Heart left ventricle (tissue), 16 donors: ENCODE measurements at regions of chr11 and their contacts with region 1.

Region 1: DNA sequence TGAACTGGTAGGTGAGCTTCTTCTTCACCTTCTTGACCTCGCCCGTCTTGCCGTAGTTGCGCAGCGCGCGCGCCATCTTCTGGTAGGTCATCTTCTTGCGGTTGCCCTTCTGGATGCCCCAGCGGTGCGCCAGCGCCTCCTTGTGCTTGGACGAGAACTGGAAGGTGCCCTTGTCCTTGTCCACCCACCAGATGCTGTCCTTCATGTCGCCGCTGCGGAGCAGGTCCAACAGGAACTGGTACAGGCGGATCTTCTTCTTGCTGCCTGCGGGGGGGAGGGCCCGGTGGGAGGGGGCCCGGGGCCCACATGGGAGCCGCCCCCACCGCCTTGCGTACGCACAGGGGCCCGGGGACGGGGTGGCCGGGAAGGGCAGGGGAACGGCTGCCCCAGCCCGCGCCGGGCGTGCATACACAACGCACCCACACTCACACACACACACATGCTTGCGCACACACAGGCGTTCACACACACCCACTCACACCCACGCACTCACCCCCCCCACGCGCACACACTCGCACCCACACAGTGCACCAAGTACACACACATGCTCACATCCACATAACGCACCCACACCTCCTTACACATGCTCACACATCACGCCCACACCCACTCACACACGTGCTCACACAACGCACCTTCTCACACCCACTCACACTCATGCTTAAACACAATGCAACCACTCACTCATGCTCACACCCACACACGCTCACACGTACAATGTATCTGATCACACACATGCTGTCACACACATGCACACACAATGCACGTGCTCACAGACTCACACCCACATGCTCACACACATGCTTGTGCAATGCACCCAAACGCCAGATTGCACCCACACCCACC is 3.0 kb upstream of the MYBPC3 start:
- DNase-seq: peak; percentile 93 to 97 (median 96)
- ATAC-seq: peak; percentile 4 to 60 (median 42)
- H3K4me3 ChIP-seq: peak overlapping the region; percentile 18 to 72 (median 50)
- H3K27ac ChIP-seq: peak overlapping the region; percentile 70 to 99 (median 93)
- H3K4me1 ChIP-seq: peaks cover 0 to 37% (median 7%) of the 10 kb centered on the region in 12 donors
- H3K27me3 ChIP-seq: no peaks in the 10 kb centered on the region
- CTCF ChIP-seq: peak; percentile 79 to 99 (median 94)
- POLR2A ChIP-seq: no peak

Region 2: GRCh38 chr11:46889689-46890475 is 465.6 kb before region 1 on chr11:
- intact Hi-C with region 1: loop called in 5 of 10 experiments (anchors 2 to 10 kb)
- DNase-seq: peak in 4 of 5 donors; percentile 48 to 63 (median 58)
- ATAC-seq: peak; percentile 40 to 84 (median 81)
- H3K4me3 ChIP-seq: no peak overlapping the region
- H3K27ac ChIP-seq: no peak overlapping the region
- H3K4me1 ChIP-seq: no peaks in the 10 kb centered on the region
- H3K27me3 ChIP-seq: peaks cover 0 to 4% (median 0%) of the 10 kb centered on the region in 9 donors
- CTCF ChIP-seq: peak; percentile 70 to 92 (median 83)
- POLR2A ChIP-seq: no peak

Region 3: GRCh38 chr11:47186076-47186936 is 169.2 kb before region 1 on chr11 and contains the start of gene PACSIN3:
- intact Hi-C with region 1: loop called in 6 of 10 experiments (anchors 1 to 5 kb)
- DNase-seq: peak; percentile 59 to 80 (median 67)
- ATAC-seq: peak in 2 of 4 donors; percentile 51 to 55
- H3K4me3 ChIP-seq: peak within 1 kb of the TSS; percentile 62 to 95 (median 82)
- H3K27ac ChIP-seq: peak within 1 kb of the TSS; percentile 89 to 100 (median 96)
- H3K4me1 ChIP-seq: peaks cover 0 to 75% (median 28%) of the 10 kb centered on the region in 12 donors
- H3K27me3 ChIP-seq: peaks cover 0 to 43% (median 0%) of the 10 kb centered on the region in 9 donors
- CTCF ChIP-seq: peak in 3 of 12 donors; percentile 13 to 39 (median 15)
- POLR2A ChIP-seq: peak in 1 of 2 donors; percentile 12
- total RNA-seq, gene PACSIN3: 127 to 330 (median 211) TPM

Region 4: GRCh38 chr11:47259178-47259977 is 96.1 kb before region 1 on chr11:
- intact Hi-C with region 1: loop called in 6 of 10 experiments (anchors 1 to 5 kb)
- DNase-seq: peak in 2 of 5 donors; percentile 54 to 55
- ATAC-seq: peak; percentile 22 to 57 (median 46)
- H3K4me3 ChIP-seq: peak overlapping the region in 6 of 12 donors; percentile 43 to 57 (median 50)
- H3K27ac ChIP-seq: peak overlapping the region in 10 of 12 donors; percentile 9 to 90 (median 82)
- H3K4me1 ChIP-seq: peaks cover 9 to 62% (median 46%) of the 10 kb centered on the region in 12 donors
- H3K27me3 ChIP-seq: no peaks in the 10 kb centered on the region
- CTCF ChIP-seq: peak; percentile 58 to 82 (median 69)
- POLR2A ChIP-seq: no peak

Region 5: GRCh38 chr11:47285969-47286770 is 69.3 kb before region 1 on chr11:
- intact Hi-C with region 1: loop called in 2 of 10 experiments (anchors 5 kb)
- DNase-seq: no peak
- ATAC-seq: peak; percentile 18 to 70 (median 36)
- H3K4me3 ChIP-seq: no peak overlapping the region
- H3K27ac ChIP-seq: peak overlapping the region in 9 of 12 donors; percentile 26 to 85 (median 54)
- H3K4me1 ChIP-seq: peaks cover 0 to 39% (median 6%) of the 10 kb centered on the region in 12 donors
- H3K27me3 ChIP-seq: no peaks in the 10 kb centered on the region
- CTCF ChIP-seq: no peak
- POLR2A ChIP-seq: no peak

Region 6: GRCh38 chr11:47329987-47330931 is 25.2 kb before region 1 on chr11:
- intact Hi-C with region 1: no loop called
- DNase-seq: peak in 4 of 5 donors; percentile 48 to 71 (median 54)
- ATAC-seq: peak; percentile 23 to 40 (median 34)
- H3K4me3 ChIP-seq: no peak overlapping the region
- H3K27ac ChIP-seq: peak overlapping the region; percentile 43 to 83 (median 68)
- H3K4me1 ChIP-seq: peaks cover 0 to 76% (median 39%) of the 10 kb centered on the region in 12 donors
- H3K27me3 ChIP-seq: no peaks in the 10 kb centered on the region
- CTCF ChIP-seq: peak in 1 of 12 donors; percentile 19
- POLR2A ChIP-seq: no peak